Gastrocnemius medialis (tissue), 4 donors: ENCODE measurements at regions of chr19 and their contacts with region 1.

Region 1: DNA sequence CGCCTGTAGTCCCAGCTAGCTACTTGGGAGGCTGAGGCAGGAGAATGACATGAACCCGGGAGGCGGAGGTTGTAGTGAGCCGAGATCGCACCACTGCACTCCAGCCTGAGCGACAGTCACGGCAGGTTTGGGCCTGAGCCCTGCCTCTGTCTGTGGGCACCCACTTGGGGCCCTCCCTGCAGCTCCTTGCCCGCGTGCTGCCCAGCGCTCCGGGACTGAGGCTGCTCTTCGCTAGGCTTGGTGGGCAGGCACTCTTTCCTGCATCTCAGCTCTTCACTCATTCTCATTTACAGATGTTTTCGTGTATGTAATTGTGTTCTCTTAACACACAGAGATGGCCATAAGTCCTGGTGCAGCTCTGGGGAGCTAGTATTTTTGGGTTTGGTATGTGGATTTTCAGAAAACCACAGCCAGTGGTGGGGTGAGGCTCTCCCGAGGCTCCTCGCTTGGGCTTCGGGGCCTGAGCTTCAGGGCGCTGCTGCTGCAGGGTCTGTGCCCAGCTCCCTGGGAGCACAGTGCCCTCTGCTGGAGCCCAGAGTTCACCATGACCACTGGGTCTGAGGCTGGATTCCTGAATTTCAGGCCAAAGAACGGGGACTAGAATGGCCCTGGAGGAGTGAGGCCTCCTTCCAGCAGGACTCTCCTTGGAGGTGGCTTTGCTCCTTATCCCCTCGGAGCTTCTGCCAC is 15.2 kb downstream of the UPF1 start:
- DNase-seq: peak; percentile 44 to 67
- ATAC-seq: peak; percentile 59 to 77
- H3K4me3 ChIP-seq: no peak overlapping the region
- H3K27ac ChIP-seq: peak overlapping the region in 3 of 4 donors; percentile 65 to 80 (median 67)
- H3K4me1 ChIP-seq: peaks cover 49 to 53% of the 10 kb centered on the region in 2 donors
- H3K27me3 ChIP-seq: no peaks in the 10 kb centered on the region
- CTCF ChIP-seq: peak; percentile 71 to 90 (median 83)
- POLR2A ChIP-seq: no peak

Region 2: GRCh38 chr19:18594096-18594823 is 252.7 kb before region 1 on chr19:
- in situ Hi-C with region 1: loop called (anchors 10 to 25 kb)
- intact Hi-C with region 1: loop called (anchors 1 kb)
- DNase-seq: peak; percentile 30 to 57
- ATAC-seq: peak; percentile 51 to 57
- H3K4me3 ChIP-seq: peak overlapping the region; percentile 34 to 54 (median 46)
- H3K27ac ChIP-seq: peak overlapping the region in 2 of 4 donors; percentile 13 to 32
- H3K4me1 ChIP-seq: peaks cover 24 to 26% of the 10 kb centered on the region in 2 donors
- H3K27me3 ChIP-seq: no peaks in the 10 kb centered on the region
- CTCF ChIP-seq: peak; percentile 81 to 93 (median 91)
- POLR2A ChIP-seq: no peak

Region 3: DNA sequence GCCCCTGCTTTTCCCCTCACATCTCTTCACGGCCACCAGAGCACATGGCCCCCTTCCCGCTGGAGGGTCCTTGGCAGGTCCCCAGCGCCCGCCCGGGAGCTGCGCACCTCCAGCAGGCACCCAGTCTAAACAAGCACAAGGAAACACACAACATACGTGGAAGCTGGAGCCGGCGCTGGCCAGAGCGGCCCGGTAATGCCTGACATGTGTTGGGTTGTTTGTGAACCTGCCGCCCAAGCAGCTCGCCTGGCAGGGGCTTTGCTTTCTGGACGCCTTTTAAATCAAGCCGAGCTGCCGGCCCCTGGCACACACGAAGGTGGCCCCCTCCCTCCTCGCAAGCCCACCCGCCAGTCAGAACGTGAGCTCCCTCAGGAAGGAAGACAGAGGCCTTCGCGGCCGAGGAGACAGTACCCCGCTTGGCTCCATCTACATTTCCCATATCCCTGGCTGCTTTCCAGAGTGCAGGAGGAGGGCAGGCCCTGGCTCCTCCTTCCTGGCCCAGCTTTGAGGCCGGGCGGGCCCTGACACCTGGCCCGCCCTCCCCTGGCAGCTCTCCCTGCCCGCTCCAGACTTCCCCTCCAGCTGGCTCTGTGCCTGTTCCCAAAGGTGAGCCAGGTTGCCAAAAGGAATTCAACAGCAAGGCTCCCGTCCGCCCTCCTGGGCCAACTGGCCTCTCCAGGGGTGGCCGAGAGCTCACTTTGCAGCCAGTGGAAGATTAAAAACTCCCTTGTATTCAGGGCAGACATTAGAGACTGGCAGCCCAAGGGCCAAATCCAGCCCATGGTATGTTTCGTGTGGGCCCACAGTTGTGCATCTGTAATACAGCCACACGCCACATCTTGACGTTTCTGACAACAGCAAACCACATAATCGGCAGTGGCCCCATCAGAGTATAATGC is 84.6 kb before region 1 on chr19:
- in situ Hi-C with region 1: no loop called
- intact Hi-C with region 1: loop called (anchors 5 kb)
- DNase-seq: peak; percentile 51 to 89
- ATAC-seq: peak; percentile 67 to 80
- H3K4me3 ChIP-seq: peak overlapping the region in 3 of 4 donors; percentile 11 to 29 (median 22)
- H3K27ac ChIP-seq: peak overlapping the region; percentile 58 to 80 (median 68)
- H3K4me1 ChIP-seq: peaks cover 22 to 31% of the 10 kb centered on the region in 2 donors
- H3K27me3 ChIP-seq: no peaks in the 10 kb centered on the region
- CTCF ChIP-seq: no peak
- POLR2A ChIP-seq: no peak

Region 4: DNA sequence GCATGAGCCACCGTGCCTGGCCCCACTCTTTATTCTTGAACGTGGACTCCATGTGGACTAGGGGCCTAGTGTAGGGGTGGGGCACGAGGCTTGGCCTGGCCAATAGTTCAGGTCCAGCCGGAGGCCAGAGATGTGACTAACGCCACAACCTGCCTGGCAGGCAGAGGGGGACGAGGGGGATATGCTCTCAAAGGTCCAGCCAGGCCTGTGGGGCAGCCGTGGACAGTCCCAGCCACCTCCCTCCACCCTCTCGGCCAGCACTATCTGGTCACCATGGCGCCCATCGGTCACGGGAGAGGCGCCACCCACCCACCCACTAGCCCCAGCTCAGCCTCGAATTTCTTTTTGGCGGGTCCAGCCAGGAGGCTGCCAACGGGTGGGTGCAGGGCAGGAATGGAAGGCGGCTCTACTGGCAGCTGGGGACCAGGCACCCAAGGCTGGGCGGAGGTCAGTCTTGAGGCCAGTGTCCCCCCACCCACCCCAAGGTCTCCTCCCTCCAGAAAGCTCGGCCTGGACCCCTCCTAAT is 51.1 kb after region 1 on chr19:
- in situ Hi-C with region 1: no loop called
- intact Hi-C with region 1: no loop called
- DNase-seq: peak in 1 of 2 donors; percentile 35
- ATAC-seq: no peak
- H3K4me3 ChIP-seq: no peak overlapping the region
- H3K27ac ChIP-seq: no peak overlapping the region
- H3K4me1 ChIP-seq: peaks cover 8 to 29% of the 10 kb centered on the region in 2 donors
- H3K27me3 ChIP-seq: no peaks in the 10 kb centered on the region
- CTCF ChIP-seq: no peak
- POLR2A ChIP-seq: no peak